ENCODE measurements at regions of chr2 and their contacts with region 1.

Region 1: DNA sequence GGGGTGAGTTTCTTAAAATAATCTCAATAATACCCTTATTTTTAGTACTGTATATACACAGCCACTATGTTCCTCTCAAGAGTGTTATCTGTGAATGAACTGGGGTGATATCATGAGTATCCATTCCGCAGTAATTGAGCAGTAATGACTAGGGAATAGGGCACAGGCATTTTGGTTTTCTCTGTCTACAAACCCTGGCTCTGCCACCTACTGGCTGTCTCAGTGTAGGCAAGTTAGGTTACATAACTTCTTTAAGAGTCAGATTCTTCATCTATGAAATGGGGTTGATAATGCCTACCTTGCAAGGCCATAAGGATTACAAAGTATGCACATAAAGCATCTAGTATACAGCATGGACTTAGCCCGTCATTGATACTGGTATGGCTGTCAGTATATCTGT is 555.8 kb downstream of the NRXN1 start:
- DNase-seq: no peak
- H3K4me3 ChIP-seq: no peak overlapping the region
- H3K27me3 ChIP-seq: no peaks in the 10 kb centered on the region
- CTCF ChIP-seq: no peak

Region 2: DNA sequence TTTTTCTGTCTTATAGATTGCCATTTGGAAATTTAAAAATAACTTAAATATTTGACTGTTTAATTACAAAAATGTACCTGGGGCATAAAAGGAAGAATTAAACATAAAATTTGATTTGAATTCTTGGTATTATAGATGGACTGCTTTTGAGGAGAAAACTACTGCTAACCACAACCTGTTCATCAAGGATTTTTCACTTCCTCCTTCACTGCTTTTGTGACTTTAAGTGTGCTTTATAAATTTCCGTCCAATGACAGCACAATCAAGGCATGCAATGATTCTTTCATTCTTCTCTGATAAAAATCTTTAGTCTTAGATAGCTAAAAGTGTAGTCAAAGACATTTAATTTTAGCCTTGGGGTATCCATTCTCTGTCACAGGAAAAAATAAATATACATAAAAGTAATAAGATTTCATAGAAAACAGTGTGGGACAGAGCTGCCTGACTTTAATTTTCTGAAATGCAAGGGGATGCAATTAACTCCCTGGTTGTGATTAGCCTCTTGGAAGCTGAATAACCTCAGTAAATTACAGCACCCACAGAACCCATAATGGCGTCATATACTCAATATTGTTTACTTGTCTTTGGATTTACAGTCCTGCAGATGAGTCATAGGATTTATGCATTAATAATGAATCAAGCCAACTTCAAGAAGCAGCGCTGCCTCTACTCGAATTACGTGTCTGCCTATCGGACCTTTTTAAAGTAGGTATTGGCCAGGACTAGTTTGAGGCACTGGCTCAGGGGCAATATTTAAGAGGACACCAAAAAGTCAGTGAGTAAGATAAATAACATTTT is 32.1 kb before region 1 on chr2:
- CTCF ChIA-PET with region 1: no interaction called
- POLR2A ChIA-PET with region 1: no interaction called
- DNase-seq: no peak
- H3K4me3 ChIP-seq: no peak overlapping the region
- H3K27me3 ChIP-seq: no peaks in the 10 kb centered on the region
- CTCF ChIP-seq: no peak

Region 3: DNA sequence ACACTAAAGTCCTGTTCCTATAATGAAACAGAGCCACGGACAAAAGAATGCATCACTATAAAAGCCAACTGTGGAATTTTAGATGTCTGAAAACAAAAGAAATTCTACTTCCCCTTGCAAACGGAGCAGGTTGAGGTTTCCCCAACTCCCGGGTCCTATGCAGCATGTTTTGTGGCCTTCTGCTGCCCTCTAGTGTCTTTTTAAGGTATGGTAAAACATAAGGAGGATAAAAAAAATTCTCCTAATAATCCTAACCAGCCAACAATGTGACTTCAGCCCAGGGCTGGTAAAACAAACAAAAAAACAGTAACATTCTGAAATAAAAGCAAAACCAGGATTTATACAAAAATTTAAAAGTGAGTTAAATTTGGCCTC is 16.3 kb after region 1 on chr2:
- CTCF ChIA-PET with region 1: interaction called, 12 read pairs
- POLR2A ChIA-PET with region 1: no interaction called
- DNase-seq: no peak
- H3K4me3 ChIP-seq: no peak overlapping the region
- H3K27me3 ChIP-seq: no peaks in the 10 kb centered on the region
- CTCF ChIP-seq: peak; percentile 78